H1 (cell line): ENCODE measurements at regions of chr11 and their contacts with region 1.

Region 1: DNA sequence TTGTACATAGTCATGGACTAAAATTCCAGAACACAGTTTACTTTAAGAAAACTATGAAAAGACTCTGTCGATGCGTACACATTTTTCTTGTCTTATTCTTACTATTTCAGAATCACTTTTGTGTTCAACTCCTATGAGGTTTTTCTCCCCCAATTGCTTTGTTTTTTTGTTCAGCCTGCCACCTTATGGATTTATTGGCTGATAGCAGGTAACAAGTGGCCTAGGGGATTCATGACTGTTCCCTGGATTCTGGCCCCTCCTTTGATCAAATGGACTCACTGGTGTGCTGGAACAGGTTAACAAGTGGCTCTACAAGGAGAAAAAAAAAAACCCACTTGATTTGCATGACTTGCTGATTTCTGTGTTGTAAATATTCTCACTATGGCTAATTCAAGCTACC is 10.6 kb downstream of the MMP20 start:
- DNase-seq: no peak
- H3K4me3 ChIP-seq: no peak overlapping the region
- H3K27ac ChIP-seq: no peak overlapping the region
- H3K4me1 ChIP-seq: peaks cover 4 to 18% (median 12%) of the 10 kb centered on the region in 4 experiments
- H3K27me3 ChIP-seq: no peaks in the 10 kb centered on the region
- CTCF ChIP-seq: no peak
- EP300 ChIP-seq: no peak
- POLR2A ChIP-seq: no peak
- RAD21 ChIP-seq: peak; percentile 14 to 27; a peak in 2 of 4 replicates

Region 2: DNA sequence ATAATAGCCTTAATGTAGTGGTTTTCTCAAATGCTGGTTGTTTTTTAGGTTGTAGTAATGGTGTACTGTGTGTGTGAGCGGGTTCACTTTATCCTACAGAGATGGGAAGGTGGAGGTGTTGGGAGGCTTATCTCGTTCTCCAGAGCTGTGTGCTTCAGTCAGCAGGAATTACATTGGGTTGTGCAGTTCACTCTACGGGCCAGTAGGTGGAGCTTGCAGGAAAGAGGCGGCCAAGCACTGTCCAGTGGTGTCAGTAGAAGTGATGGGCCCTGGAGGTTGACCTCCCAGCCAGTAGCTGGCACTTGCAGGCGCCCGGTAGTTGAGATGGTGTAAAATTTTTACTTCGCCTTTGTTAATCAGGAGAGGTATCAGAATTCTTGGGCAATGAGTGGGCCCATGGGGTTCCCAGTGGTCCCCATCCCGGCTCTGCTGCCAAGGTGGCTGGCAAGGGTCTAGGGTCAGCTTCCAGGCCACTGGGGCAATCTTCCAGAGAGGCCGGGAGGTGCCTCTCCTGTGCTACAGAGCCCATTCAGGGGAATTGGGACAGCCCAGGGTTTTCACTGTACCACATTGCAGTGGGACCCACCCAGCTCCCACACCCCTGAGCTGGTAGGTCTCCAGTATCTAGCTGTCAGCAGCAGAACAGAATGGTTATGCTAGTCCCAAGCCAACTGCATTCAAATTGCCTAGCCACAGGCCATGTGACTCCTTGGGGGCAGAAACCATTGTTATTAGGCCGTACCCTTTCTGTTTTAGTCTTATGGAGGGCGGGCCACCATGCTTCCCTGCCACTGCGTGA is 223.6 kb before region 1 on chr11:
- CTCF ChIA-PET with region 1: interaction called, 36 read pairs
- POLR2A ChIA-PET with region 1: no interaction called
- DNase-seq: peak; percentile 43 to 69
- H3K4me3 ChIP-seq: no peak overlapping the region
- H3K27ac ChIP-seq: no peak overlapping the region
- H3K4me1 ChIP-seq: no peaks in the 10 kb centered on the region
- H3K27me3 ChIP-seq: no peaks in the 10 kb centered on the region
- CTCF ChIP-seq: peak; percentile 86 to 93 (median 92)
- EP300 ChIP-seq: no peak
- POLR2A ChIP-seq: no peak
- RAD21 ChIP-seq: peak; percentile 72 to 80

Region 3: DNA sequence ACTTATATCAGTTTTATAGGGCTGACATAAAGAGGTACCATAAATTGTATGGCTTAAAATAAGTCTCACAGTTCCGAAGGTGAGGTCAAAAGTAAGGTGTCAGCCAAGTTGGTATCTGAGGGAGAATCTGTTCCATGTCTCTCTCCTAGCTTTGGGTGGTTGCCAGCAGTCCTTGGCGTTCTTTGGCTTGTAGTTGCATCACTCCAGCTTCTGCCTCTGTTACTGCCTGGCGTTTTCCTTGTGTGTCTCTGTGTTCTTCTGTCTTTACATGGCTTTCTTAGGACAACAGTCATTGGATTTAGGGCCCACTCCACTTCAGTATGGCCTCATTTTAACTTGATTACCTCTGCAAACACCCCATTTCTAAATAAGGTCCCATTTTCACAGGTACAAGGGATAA is 100.6 kb before region 1 on chr11:
- CTCF ChIA-PET with region 1: interaction called, 14 read pairs
- POLR2A ChIA-PET with region 1: no interaction called
- DNase-seq: no peak
- H3K4me3 ChIP-seq: no peak overlapping the region
- H3K27ac ChIP-seq: no peak overlapping the region
- H3K4me1 ChIP-seq: no peaks in the 10 kb centered on the region
- H3K27me3 ChIP-seq: no peaks in the 10 kb centered on the region
- CTCF ChIP-seq: no peak
- EP300 ChIP-seq: no peak
- POLR2A ChIP-seq: no peak
- RAD21 ChIP-seq: no peak

Region 4: DNA sequence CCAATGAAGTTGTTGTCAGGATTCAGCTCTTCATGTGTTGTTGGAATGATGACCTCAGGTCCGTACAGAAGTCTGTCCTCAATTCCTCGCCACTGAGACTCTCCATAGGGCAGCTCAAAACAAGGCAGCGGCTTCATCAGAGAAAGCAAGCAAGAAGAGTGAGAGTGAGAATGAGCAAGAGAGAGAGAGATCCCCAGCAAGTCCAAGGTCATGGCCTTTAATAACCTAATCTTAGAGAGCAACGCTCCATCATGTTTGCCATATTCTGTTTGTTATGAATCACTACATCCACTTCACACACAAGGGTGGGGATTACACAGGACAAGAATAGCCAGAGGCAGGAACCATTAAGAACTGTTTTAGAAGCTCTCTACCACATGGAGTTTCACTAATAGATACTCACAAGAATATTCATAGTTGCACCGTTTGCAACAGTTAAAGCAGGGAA is 60.6 kb before region 1 on chr11:
- CTCF ChIA-PET with region 1: interaction called, 12 read pairs
- POLR2A ChIA-PET with region 1: no interaction called
- DNase-seq: no peak
- H3K4me3 ChIP-seq: no peak overlapping the region
- H3K27ac ChIP-seq: no peak overlapping the region
- H3K4me1 ChIP-seq: peaks cover 0 to 2% (median 0%) of the 10 kb centered on the region in 4 experiments; a peak in 1 of 7 replicates
- H3K27me3 ChIP-seq: no peaks in the 10 kb centered on the region
- CTCF ChIP-seq: no peak
- EP300 ChIP-seq: no peak
- POLR2A ChIP-seq: no peak
- RAD21 ChIP-seq: no peak

Region 5: GRCh38 chr11:102577182-102577581 is 37.3 kb before region 1 on chr11:
- CTCF ChIA-PET with region 1: no interaction called
- POLR2A ChIA-PET with region 1: no interaction called
- DNase-seq: no peak
- H3K4me3 ChIP-seq: no peak overlapping the region
- H3K27ac ChIP-seq: no peak overlapping the region
- H3K4me1 ChIP-seq: no peaks in the 10 kb centered on the region
- H3K27me3 ChIP-seq: no peaks in the 10 kb centered on the region
- CTCF ChIP-seq: no peak
- EP300 ChIP-seq: no peak
- POLR2A ChIP-seq: no peak
- RAD21 ChIP-seq: no peak

Region 6: GRCh38 chr11:102603091-102603490 is 11.4 kb before region 1 on chr11:
- CTCF ChIA-PET with region 1: interaction called, 33 read pairs
- POLR2A ChIA-PET with region 1: interaction called, 6 read pairs
- DNase-seq: no peak
- H3K4me3 ChIP-seq: no peak overlapping the region
- H3K27ac ChIP-seq: no peak overlapping the region
- H3K4me1 ChIP-seq: peaks cover 0 to 6% (median 1%) of the 10 kb centered on the region in 4 experiments; a peak in 2 of 7 replicates
- H3K27me3 ChIP-seq: no peaks in the 10 kb centered on the region
- CTCF ChIP-seq: no peak
- EP300 ChIP-seq: no peak
- POLR2A ChIP-seq: no peak
- RAD21 ChIP-seq: no peak

Region 7: DNA sequence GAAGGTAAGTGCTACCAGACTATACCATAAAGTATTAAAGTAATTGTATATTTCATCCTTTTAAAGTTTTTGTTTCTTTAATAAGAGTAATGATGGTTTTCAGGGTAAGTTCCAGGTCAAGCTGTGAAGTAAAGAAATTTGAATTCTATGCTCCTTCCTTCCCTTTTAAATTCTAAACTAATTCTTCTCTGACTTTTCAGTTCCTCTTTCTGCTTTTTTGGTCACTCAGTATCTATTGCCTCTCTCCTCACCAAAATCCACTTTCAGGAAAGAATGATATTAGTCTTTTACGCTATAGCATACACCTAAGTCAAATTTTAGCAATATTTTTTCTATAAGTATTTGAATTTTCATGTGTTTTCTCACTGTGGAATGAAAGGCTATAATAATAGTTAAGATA is 102.0 kb after region 1 on chr11:
- CTCF ChIA-PET with region 1: no interaction called
- POLR2A ChIA-PET with region 1: no interaction called
- DNase-seq: no peak
- H3K4me3 ChIP-seq: no peak overlapping the region
- H3K27ac ChIP-seq: no peak overlapping the region
- H3K4me1 ChIP-seq: no peaks in the 10 kb centered on the region
- H3K27me3 ChIP-seq: no peaks in the 10 kb centered on the region
- CTCF ChIP-seq: no peak
- EP300 ChIP-seq: no peak
- POLR2A ChIP-seq: no peak
- RAD21 ChIP-seq: no peak